CD14-positive monocyte (primary cell): ENCODE measurements at regions of chr3 and their contacts with region 1.

Region 1: GRCh38 chr3:16290007-16290826 is 25.2 kb downstream of the OXNAD1 start:
- DNase-seq: peak; percentile 9 to 37 (median 25)
- H3K4me3 ChIP-seq: no peak overlapping the region
- H3K4me3 Mint-ChIP-seq: no peak overlapping the region
- H3K27ac ChIP-seq: peak overlapping the region in 1 of 2 donors; percentile 52
- H3K27ac Mint-ChIP-seq: peak overlapping the region in 3 of 7 donors; percentile 17 to 34 (median 25)
- H3K4me1 ChIP-seq: peaks cover 17 to 26% of the 10 kb centered on the region in 2 donors
- H3K4me1 Mint-ChIP-seq: peaks cover 35% of the 10 kb centered on the region
- H3K27me3 ChIP-seq: no peaks in the 10 kb centered on the region
- H3K27me3 Mint-ChIP-seq: no peaks in the 10 kb centered on the region
- CTCF ChIP-seq: peak; percentile 84

Region 2: DNA sequence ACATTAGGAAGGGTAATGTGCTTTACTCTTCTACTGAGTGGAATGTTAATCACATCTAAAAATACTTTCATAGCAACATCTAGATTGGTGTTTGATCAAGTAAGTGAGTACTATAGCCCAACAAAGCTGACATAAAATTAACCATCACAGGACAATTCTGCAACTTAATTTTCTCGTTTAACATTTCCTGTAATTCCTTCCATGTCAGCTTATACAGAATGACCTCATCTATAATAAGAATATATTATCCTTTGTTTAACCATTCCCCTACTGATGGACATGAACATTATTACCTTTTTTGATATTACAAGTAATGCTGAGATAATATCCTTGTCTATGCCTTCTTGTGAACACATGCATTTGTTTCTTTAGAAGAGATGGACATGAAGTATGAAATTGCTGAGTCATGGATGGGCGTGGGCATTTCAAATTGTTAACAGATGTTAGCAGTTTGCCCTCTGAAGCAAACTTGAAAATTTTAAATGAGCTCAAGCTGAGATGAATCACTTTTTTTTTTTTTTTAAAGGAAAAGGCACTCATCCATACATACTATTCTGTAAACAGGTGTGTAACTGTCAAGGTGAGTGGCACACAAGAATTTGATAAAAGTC is 59.9 kb after region 1 on chr3:
- intact Hi-C with region 1: no loop called
- DNase-seq: no peak
- H3K4me3 ChIP-seq: no peak overlapping the region
- H3K4me3 Mint-ChIP-seq: no peak overlapping the region
- H3K27ac ChIP-seq: no peak overlapping the region
- H3K27ac Mint-ChIP-seq: no peak overlapping the region
- H3K4me1 ChIP-seq: no peaks in the 10 kb centered on the region
- H3K4me1 Mint-ChIP-seq: peaks cover 6% of the 10 kb centered on the region
- H3K27me3 ChIP-seq: no peaks in the 10 kb centered on the region
- H3K27me3 Mint-ChIP-seq: no peaks in the 10 kb centered on the region
- CTCF ChIP-seq: no peak

Region 3: GRCh38 chr3:16550676-16551341 is 260.6 kb after region 1 on chr3:
- intact Hi-C with region 1: loop called (anchors 2 kb)
- DNase-seq: peak; percentile 75 to 83 (median 81)
- H3K4me3 ChIP-seq: no peak overlapping the region
- H3K4me3 Mint-ChIP-seq: no peak overlapping the region
- H3K27ac ChIP-seq: no peak overlapping the region
- H3K27ac Mint-ChIP-seq: peak overlapping the region in 1 of 7 donors; percentile 61
- H3K4me1 ChIP-seq: no peaks in the 10 kb centered on the region
- H3K4me1 Mint-ChIP-seq: peaks cover 2% of the 10 kb centered on the region
- H3K27me3 ChIP-seq: no peaks in the 10 kb centered on the region
- H3K27me3 Mint-ChIP-seq: no peaks in the 10 kb centered on the region
- CTCF ChIP-seq: peak; percentile 93